ENCODE measurements at regions of chr1 and their contacts with region 1.

Region 1: GRCh38 chr1:22451702-22452474 is at the start of gene ZBTB40:
- DNase-seq: peak; percentile 97 to 99 (median 98)
- ATAC-seq: peak; percentile 94 to 98 (median 98)
- H3K4me3 ChIP-seq: peak within 1 kb of the TSS; percentile 68 to 99 (median 84)
- H3K27ac ChIP-seq: peak within 1 kb of the TSS; percentile 90 to 99 (median 96)
- H3K4me1 ChIP-seq: peaks cover 0 to 56% (median 34%) of the 10 kb centered on the region in 12 donors
- H3K27me3 ChIP-seq: no peaks in the 10 kb centered on the region
- CTCF ChIP-seq: peak in 1 of 12 donors; percentile 10
- POLR2A ChIP-seq: peak in 1 of 2 donors; percentile 48
- total RNA-seq, gene ZBTB40: 9.7 to 17.7 (median 15.2) TPM

Region 2: GRCh38 chr1:22490309-22490708 is 38.4 kb after region 1 on chr1:
- intact Hi-C with region 1: loop called in 2 of 10 experiments (anchors 5 kb)
- DNase-seq: no peak
- ATAC-seq: no peak
- H3K4me3 ChIP-seq: no peak overlapping the region
- H3K27ac ChIP-seq: no peak overlapping the region
- H3K4me1 ChIP-seq: peaks cover 0 to 52% (median 24%) of the 10 kb centered on the region in 12 donors
- H3K27me3 ChIP-seq: no peaks in the 10 kb centered on the region
- CTCF ChIP-seq: no peak
- POLR2A ChIP-seq: no peak

Region 3: GRCh38 chr1:22500471-22500870 is 48.6 kb after region 1 on chr1:
- intact Hi-C with region 1: loop called in 1 of 10 experiments (anchors 5 kb)
- DNase-seq: peak in 3 of 5 donors; percentile 20 to 43 (median 41)
- ATAC-seq: peak in 3 of 4 donors; percentile 56 to 68 (median 62)
- H3K4me3 ChIP-seq: no peak overlapping the region
- H3K27ac ChIP-seq: peak overlapping the region in 6 of 12 donors; percentile 1 to 61 (median 8)
- H3K4me1 ChIP-seq: peaks cover 0 to 38% (median 15%) of the 10 kb centered on the region in 12 donors
- H3K27me3 ChIP-seq: no peaks in the 10 kb centered on the region
- CTCF ChIP-seq: no peak
- POLR2A ChIP-seq: no peak

Measured in heart left ventricle (tissue), 16 donors.